HepG2 (cell line): ENCODE measurements at regions of chr11 and their contacts with region 1.

Region 1: DNA sequence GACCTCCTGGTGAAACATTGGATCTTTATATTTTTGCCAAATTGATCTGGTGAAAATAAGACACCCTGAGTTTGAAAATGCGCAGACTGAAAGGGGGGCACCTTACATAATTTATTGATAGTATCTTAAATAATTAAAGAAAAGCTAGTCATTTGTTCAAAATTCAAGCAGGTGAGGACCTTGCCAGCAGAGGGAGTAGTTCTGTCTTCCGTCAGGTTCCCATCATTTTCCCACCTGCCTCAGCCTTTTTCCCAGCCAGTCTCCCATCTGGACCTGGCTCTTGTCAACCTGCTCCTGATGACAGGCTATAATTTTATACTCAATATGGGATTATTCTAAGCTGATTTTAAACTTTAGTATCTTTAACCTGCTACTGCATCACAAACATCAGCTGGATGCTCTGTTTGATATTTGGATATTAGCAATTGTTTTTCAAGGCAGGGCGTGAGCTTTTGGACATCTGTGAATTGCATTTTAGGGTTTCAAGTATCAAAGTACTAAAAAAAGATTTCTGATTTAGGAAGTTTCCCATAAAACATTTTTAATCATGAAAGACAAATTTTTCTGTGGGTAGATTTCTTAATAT is 132.0 kb downstream of the ELP4 start:
- DNase-seq: peak; percentile 40
- ATAC-seq: no peak
- H3K4me3 ChIP-seq: no peak overlapping the region
- H3K27ac ChIP-seq: no peak overlapping the region
- H3K4me1 ChIP-seq: no peaks in the 10 kb centered on the region
- H3K27me3 ChIP-seq: no peaks in the 10 kb centered on the region
- CTCF ChIP-seq: peak; percentile 63
- EP300 ChIP-seq: no peak
- POLR2A ChIP-seq: no peak
- RAD21 ChIP-seq: 0 out of 2 replicates have a peak, but pooled peaks have one; percentile 17

Region 2: GRCh38 chr11:31397239-31397834 is 244.2 kb before region 1 on chr11:
- CTCF ChIA-PET with region 1: no interaction called
- POLR2A ChIA-PET with region 1: no interaction called
- in situ Hi-C with region 1: no loop called
- intact Hi-C with region 1: loop called (anchors 2 kb)
- DNase-seq: peak; percentile 18
- ATAC-seq: peak; percentile 56; the same call in 2 of the 3 replicates
- H3K4me3 ChIP-seq: no peak overlapping the region
- H3K27ac ChIP-seq: no peak overlapping the region
- H3K4me1 ChIP-seq: no peaks in the 10 kb centered on the region
- H3K27me3 ChIP-seq: no peaks in the 10 kb centered on the region
- CTCF ChIP-seq: peak; percentile 66
- EP300 ChIP-seq: no peak
- POLR2A ChIP-seq: no peak
- RAD21 ChIP-seq: no peak

Region 3: DNA sequence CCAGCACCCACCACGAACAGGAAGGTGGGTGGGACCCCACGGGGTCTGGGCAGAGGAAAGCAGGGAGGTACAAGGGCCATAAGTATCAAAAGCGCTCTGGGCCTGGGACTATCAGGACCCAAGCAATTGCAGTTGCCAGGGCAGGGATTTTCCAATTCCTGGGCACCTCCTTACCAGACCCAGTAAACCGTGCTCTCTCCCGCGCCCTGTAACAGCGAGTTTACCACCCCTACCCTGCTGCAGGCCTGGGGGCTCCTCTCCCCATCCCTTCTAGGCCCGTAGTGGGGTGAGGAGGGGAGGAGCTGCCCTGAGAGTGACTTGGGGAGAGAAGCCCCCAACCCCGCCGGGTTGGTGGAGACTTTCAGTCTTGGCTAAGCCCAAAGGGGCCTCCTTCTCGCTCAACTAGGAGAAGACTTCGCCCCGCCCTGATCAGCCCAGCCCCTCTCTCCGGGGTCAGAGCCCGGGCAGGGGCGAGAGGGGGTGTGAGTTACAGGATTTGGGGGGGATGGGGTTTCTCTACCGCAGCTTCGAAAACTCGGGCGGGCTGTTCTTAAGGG is 164.1 kb after region 1 on chr11:
- CTCF ChIA-PET with region 1: no interaction called
- POLR2A ChIA-PET with region 1: no interaction called
- in situ Hi-C with region 1: no loop called
- intact Hi-C with region 1: loop called (anchors 2 kb)
- DNase-seq: no peak
- ATAC-seq: no peak
- H3K4me3 ChIP-seq: no peak overlapping the region
- H3K27ac ChIP-seq: no peak overlapping the region
- H3K4me1 ChIP-seq: peaks cover 14% of the 10 kb centered on the region
- H3K27me3 ChIP-seq: peaks cover 5 to 36% of the 10 kb centered on the region in 2 experiments; a peak in 4 of 5 replicates
- CTCF ChIP-seq: no peak
- EP300 ChIP-seq: no peak
- POLR2A ChIP-seq: no peak
- RAD21 ChIP-seq: no peak

Region 4: GRCh38 chr11:31826536-31827438 is 185.2 kb after region 1 on chr11:
- CTCF ChIA-PET with region 1: no interaction called
- POLR2A ChIA-PET with region 1: no interaction called
- in situ Hi-C with region 1: no loop called
- intact Hi-C with region 1: loop called (anchors 5 kb)
- DNase-seq: no peak
- ATAC-seq: peak; percentile 41; the same call in 2 of the 3 replicates
- H3K4me3 ChIP-seq: no peak overlapping the region; a peak in 1 of 6 replicates
- H3K27ac ChIP-seq: no peak overlapping the region
- H3K4me1 ChIP-seq: 0 out of 2 replicates have a peak, but pooled peaks cover 8% of the 10 kb centered on the region
- H3K27me3 ChIP-seq: peaks cover 7 to 76% of the 10 kb centered on the region in 2 experiments
- CTCF ChIP-seq: no peak
- EP300 ChIP-seq: no peak
- POLR2A ChIP-seq: no peak
- RAD21 ChIP-seq: no peak

Region 5: GRCh38 chr11:31958076-31958735 is 316.6 kb after region 1 on chr11:
- CTCF ChIA-PET with region 1: no interaction called
- POLR2A ChIA-PET with region 1: no interaction called
- in situ Hi-C with region 1: loop called (anchors 10 kb)
- intact Hi-C with region 1: loop called (anchors 2 kb)
- DNase-seq: peak; percentile 15
- ATAC-seq: peak; percentile 95
- H3K4me3 ChIP-seq: no peak overlapping the region
- H3K27ac ChIP-seq: no peak overlapping the region
- H3K4me1 ChIP-seq: no peaks in the 10 kb centered on the region
- H3K27me3 ChIP-seq: peaks cover 0 to 13% of the 10 kb centered on the region in 2 experiments; a peak in 1 of 5 replicates
- CTCF ChIP-seq: peak; percentile 76
- EP300 ChIP-seq: no peak
- POLR2A ChIP-seq: no peak
- RAD21 ChIP-seq: peak; percentile 62